ENCODE measurements at regions of chr21 and their contacts with region 1.

Region 1: GRCh38 chr21:43911015-43911934 is 46.3 kb downstream of the AGPAT3 start:
- DNase-seq: peak; percentile 68
- ATAC-seq: peak; percentile 95
- H3K4me3 ChIP-seq: peak overlapping the region; percentile 20 to 63 (median 31); a peak in 5 of 6 replicates
- H3K27ac ChIP-seq: peak overlapping the region; percentile 72
- H3K4me1 ChIP-seq: peaks cover 53% of the 10 kb centered on the region
- H3K27me3 ChIP-seq: no peaks in the 10 kb centered on the region
- CTCF ChIP-seq: peak; percentile 87
- EP300 ChIP-seq: peak in 1 of 2 experiments; percentile 29; a peak in 1 of 4 replicates
- POLR2A ChIP-seq: no peak
- RAD21 ChIP-seq: peak; percentile 78

Region 2: DNA sequence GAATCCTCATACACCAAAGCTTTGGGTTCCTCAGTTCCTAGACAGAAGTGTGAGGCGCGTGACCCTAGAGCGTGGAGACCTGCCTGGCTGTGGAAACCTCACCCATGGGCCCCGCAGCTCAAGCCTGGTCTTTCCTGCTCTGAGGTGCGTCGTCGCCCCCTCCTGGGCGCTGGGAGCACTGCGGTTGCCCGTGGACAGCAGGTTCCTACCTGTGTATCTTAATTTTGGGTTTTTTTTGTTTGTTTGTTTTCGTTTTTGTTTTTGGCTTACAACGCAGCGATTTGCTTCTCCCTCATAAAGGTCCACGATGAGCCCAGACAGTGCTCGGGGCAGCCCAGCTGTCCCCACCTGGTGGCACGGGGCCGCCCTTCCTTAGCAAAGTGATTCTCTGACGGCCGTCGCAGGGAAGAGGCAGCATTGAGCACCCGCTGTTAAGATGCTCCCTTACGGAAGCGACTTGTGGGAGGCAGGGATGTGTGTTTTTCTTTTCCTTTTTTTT is 64.3 kb after region 1 on chr21:
- CTCF ChIA-PET with region 1: no interaction called
- POLR2A ChIA-PET with region 1: no interaction called
- in situ Hi-C with region 1: no loop called
- intact Hi-C with region 1: loop called (anchors 1 kb)
- DNase-seq: peak; percentile 32
- ATAC-seq: peak; percentile 86
- H3K4me3 ChIP-seq: no peak overlapping the region
- H3K27ac ChIP-seq: no peak overlapping the region
- H3K4me1 ChIP-seq: peaks cover 17% of the 10 kb centered on the region
- H3K27me3 ChIP-seq: no peaks in the 10 kb centered on the region
- CTCF ChIP-seq: peak; percentile 91
- EP300 ChIP-seq: no peak
- POLR2A ChIP-seq: no peak
- RAD21 ChIP-seq: peak; percentile 80